ENCODE measurements at regions of chr12 and their contacts with region 1.

Region 1: GRCh38 chr12:77049767-77050353 is 15.5 kb downstream of the E2F7 start:
- DNase-seq: no peak
- H3K4me3 ChIP-seq: no peak overlapping the region
- H3K27ac ChIP-seq: no peak overlapping the region
- H3K4me1 ChIP-seq: peaks cover 0 to 4% (median 0%) of the 10 kb centered on the region in 6 donors
- H3K27me3 ChIP-seq: no peaks in the 10 kb centered on the region
- CTCF ChIP-seq: peak in 10 of 11 experiments; percentile 31 to 75 (median 69)
- POLR2A ChIP-seq: no peak

Region 2: DNA sequence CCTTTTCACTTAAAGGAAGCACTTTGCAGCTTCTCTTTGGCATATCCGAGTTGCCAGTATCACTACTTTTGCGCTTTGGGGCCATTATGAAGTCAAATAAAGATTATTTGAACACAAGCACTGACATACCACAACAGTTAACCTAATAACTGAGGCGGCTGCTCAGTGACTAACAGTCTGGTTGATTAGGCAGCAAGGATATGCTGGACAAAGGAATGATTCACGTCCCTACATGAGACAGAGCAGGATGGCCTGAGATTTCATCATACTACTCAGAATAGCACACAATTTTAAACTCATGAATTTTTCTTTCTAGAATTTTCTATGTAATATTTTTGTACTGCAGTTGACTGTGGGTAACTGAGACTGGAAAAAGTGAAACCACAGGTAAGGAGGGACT is 72.4 kb after region 1 on chr12:
- intact Hi-C with region 1: no loop called
- DNase-seq: no peak
- H3K4me3 ChIP-seq: no peak overlapping the region
- H3K27ac ChIP-seq: no peak overlapping the region
- H3K4me1 ChIP-seq: no peaks in the 10 kb centered on the region
- H3K27me3 ChIP-seq: no peaks in the 10 kb centered on the region
- CTCF ChIP-seq: no peak
- POLR2A ChIP-seq: no peak

Region 3: GRCh38 chr12:77679686-77680085 is 629.8 kb after region 1 on chr12:
- intact Hi-C with region 1: loop called (anchors 5 kb)
- DNase-seq: no peak
- H3K4me3 ChIP-seq: no peak overlapping the region
- H3K27ac ChIP-seq: no peak overlapping the region
- H3K4me1 ChIP-seq: no peaks in the 10 kb centered on the region
- H3K27me3 ChIP-seq: no peaks in the 10 kb centered on the region
- CTCF ChIP-seq: no peak
- POLR2A ChIP-seq: no peak